Ovary (tissue), 10 donors: ENCODE measurements at regions of chr18 and their contacts with region 1.

Region 1: DNA sequence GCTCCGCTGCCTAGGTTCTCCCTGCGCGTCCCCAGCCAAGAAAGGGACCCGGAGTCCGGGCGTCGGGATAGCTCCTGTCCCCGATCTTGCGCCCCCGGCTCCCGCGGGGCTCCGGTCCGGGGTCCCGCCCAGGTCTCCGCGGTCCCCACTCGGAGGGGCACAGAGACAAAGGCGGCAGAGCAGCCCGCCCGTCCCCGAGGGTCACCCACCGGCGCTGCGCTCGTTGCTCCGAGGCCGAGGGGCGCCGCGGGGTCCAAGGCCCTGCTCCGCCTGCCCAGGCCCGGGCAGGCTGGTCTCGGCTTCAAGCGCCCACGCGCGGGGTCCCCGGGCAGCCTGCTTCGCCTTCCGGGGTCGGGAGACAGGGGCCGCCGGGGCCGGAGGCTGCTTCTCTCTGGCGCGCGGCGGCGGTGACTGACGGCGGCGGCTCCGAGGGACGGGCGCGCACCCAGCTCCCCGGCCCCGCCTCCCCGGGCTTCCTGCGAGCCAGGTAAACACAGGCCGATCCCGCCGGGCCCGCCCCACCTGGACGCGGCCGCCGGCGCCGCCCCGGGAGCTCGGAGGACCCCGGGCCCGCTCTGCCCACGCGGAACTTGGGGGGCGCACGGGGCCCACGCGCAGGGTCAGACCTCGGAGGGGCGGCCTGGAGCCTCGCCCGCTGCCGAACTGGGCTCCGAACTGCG is at the start of gene MBP:
- DNase-seq: peak; percentile 67 to 77 (median 71)
- H3K4me3 ChIP-seq: peak within 1 kb of the TSS; percentile 85
- H3K27ac ChIP-seq: peak within 1 kb of the TSS; percentile 94 to 96
- H3K4me1 ChIP-seq: peaks cover 2% of the 10 kb centered on the region
- H3K27me3 ChIP-seq: no peaks in the 10 kb centered on the region
- CTCF ChIP-seq: no peak
- EP300 ChIP-seq: no peak
- POLR2A ChIP-seq: peak; percentile 41
- total RNA-seq, gene MBP: 19.9 to 38.2 (median 24.2) TPM

Region 2: DNA sequence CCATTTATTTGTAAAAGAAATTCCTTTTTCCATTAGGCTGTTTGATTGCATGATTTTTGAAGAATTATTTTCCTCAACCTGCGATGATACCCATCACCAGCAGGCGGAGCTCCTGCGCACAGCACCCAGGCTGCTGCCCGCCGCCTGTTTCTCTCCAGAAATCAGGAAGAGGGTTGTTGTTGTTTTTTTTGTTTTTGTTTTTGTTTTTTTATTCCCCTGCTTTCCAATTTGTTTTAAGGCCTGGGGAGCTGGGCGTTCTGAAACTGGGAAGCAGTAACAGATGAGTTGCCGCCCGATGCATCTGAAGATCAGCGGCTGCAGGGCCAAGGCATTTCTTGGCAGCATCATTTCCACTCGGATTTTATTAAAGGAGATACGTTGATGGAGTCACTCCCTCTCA is 132.0 kb before region 1 on chr18:
- intact Hi-C with region 1: loop called in 1 of 4 experiments (anchors 10 kb)
- DNase-seq: peak; percentile 34 to 74 (median 65)
- H3K4me3 ChIP-seq: no peak overlapping the region
- H3K27ac ChIP-seq: no peak overlapping the region
- H3K4me1 ChIP-seq: no peaks in the 10 kb centered on the region
- H3K27me3 ChIP-seq: no peaks in the 10 kb centered on the region
- CTCF ChIP-seq: peak; percentile 82 to 97 (median 88)
- EP300 ChIP-seq: no peak
- POLR2A ChIP-seq: no peak

Region 3: GRCh38 chr18:77101410-77102258 is 30.9 kb before region 1 on chr18:
- intact Hi-C with region 1: loop called in 1 of 4 experiments (anchors 5 kb)
- DNase-seq: peak; percentile 80 to 88 (median 81)
- H3K4me3 ChIP-seq: no peak overlapping the region
- H3K27ac ChIP-seq: peak overlapping the region; percentile 82 to 84
- H3K4me1 ChIP-seq: peaks cover 31% of the 10 kb centered on the region
- H3K27me3 ChIP-seq: no peaks in the 10 kb centered on the region
- CTCF ChIP-seq: no peak
- EP300 ChIP-seq: no peak
- POLR2A ChIP-seq: no peak

Region 4: DNA sequence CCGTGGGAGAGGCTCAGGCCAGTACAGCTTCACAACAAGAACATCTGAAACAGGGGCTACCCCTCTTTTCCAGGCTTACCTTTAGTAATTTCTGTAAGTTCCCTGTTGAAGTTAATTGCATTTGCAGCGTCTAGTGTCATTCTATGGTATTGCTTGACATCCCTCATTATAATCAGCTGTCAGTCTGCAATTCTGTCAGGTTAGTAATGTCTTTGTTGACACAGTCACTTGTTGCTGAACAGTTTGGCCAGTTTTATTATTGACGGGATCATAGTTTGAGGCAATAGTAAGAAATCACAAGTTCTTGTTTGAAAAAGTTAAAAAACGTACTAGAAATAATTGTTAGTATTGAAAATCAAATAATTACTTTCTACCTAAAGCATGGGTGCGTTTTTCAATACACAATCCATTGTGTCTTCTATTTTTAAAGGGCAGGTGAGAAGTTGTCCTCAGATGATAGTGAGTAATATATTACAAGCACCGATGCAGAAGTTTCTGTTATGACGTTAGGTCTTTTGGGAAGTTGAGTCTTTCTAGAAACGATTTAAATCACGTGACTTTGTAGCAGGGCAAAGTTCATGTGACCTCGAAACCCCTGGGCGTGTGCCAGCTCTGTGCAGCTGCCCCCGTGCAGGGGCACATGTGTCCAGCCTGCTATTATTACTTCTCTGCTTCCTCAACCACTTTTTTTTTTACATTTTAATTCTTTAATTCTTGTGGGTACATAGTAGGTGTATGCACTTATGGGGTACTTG is 49.6 kb after region 1 on chr18:
- intact Hi-C with region 1: loop called in 1 of 4 experiments (anchors 2 kb)
- DNase-seq: no peak
- H3K4me3 ChIP-seq: no peak overlapping the region
- H3K27ac ChIP-seq: no peak overlapping the region
- H3K4me1 ChIP-seq: no peaks in the 10 kb centered on the region
- H3K27me3 ChIP-seq: no peaks in the 10 kb centered on the region
- CTCF ChIP-seq: no peak
- EP300 ChIP-seq: no peak
- POLR2A ChIP-seq: no peak